Heart right ventricle (tissue), 16 donors: ENCODE measurements at regions of chr2 and their contacts with region 1.

Region 1: DNA sequence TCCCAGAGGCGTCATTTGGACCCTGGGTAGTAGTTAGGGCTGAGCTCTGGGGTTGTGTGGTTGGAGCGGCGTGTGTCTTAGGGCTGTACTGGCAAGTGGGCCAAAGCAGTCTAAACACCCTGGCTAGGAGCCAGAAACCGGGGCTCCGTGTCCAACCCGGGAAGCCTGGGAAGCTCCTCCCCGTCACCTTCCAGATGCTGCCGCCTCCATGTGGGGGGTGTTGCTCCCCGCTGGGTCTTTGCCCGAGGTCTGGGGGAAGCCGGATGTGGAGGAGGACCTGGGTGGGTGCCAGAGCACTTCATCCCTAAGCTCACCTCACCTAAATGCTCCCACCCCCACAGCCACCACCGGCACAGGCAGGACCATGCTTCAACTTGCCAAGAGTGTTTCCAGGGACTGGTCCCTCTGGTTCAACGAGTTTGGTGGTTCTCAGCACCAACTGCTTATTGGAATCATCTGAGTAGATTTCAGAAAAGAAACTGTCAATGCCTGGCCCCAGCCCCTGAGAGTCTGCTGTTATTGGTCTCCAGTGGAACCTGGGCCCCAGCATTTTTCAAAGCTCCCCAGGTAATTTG is 25.5 kb downstream of the TET3 start:
- DNase-seq: peak; percentile 41 to 49
- ATAC-seq: peak; percentile 25 to 72 (median 56)
- H3K4me3 ChIP-seq: peak overlapping the region in 1 of 10 donors; percentile 7
- H3K27ac ChIP-seq: no peak overlapping the region
- H3K4me1 ChIP-seq: peaks cover 8 to 56% (median 47%) of the 10 kb centered on the region in 9 donors
- H3K27me3 ChIP-seq: no peaks in the 10 kb centered on the region
- CTCF ChIP-seq: no peak

Region 2: DNA sequence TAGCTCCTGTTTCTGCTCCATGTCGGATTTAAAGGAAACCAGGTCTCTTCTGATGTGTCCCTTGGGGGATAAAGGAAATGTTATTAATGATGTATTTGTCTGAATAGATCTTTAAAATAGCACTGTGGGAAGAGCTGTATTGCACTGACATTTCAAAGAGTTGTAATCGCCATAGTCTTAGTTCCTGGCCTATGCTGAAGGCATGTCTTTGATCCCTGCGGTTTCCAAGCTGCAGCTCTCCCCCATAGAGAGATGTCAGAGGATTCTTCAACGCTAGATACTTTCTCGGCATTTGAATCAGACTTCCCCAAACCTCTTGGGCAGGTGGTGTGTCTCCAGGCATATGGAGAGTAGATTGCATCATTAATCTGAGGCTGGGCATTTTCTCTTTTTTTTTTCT is 408.4 kb before region 1 on chr2:
- intact Hi-C with region 1: no loop called
- DNase-seq: no peak
- ATAC-seq: no peak
- H3K4me3 ChIP-seq: no peak overlapping the region
- H3K27ac ChIP-seq: no peak overlapping the region
- H3K4me1 ChIP-seq: no peaks in the 10 kb centered on the region
- H3K27me3 ChIP-seq: no peaks in the 10 kb centered on the region
- CTCF ChIP-seq: no peak

Region 3: DNA sequence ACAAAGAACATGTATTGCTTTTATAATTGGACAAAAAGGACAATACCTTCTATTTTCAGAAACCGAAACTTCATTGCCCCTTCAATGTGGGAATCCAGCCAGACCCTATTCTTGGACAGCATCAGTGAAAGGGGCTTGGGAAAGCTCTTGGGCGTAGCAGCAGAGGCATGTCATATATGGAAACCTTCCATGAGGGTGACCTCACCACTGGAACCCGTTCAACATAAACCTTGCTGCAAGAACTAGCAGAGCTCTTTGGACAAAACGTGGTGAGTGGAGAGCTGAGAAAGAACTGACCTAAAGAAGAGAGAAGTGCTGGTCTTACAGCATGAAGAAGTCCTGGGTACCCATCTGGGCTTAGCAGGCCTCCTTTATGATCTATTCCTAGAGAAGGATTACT is 140.1 kb before region 1 on chr2:
- intact Hi-C with region 1: no loop called
- DNase-seq: peak in 1 of 2 donors; percentile 90
- ATAC-seq: peak; percentile 87 to 99 (median 96)
- H3K4me3 ChIP-seq: peak overlapping the region in 1 of 10 donors; percentile 1
- H3K27ac ChIP-seq: peak overlapping the region in 9 of 10 donors; percentile 4 to 84 (median 67)
- H3K4me1 ChIP-seq: peaks cover 0 to 22% (median 16%) of the 10 kb centered on the region in 9 donors
- H3K27me3 ChIP-seq: no peaks in the 10 kb centered on the region
- CTCF ChIP-seq: no peak

Region 4: DNA sequence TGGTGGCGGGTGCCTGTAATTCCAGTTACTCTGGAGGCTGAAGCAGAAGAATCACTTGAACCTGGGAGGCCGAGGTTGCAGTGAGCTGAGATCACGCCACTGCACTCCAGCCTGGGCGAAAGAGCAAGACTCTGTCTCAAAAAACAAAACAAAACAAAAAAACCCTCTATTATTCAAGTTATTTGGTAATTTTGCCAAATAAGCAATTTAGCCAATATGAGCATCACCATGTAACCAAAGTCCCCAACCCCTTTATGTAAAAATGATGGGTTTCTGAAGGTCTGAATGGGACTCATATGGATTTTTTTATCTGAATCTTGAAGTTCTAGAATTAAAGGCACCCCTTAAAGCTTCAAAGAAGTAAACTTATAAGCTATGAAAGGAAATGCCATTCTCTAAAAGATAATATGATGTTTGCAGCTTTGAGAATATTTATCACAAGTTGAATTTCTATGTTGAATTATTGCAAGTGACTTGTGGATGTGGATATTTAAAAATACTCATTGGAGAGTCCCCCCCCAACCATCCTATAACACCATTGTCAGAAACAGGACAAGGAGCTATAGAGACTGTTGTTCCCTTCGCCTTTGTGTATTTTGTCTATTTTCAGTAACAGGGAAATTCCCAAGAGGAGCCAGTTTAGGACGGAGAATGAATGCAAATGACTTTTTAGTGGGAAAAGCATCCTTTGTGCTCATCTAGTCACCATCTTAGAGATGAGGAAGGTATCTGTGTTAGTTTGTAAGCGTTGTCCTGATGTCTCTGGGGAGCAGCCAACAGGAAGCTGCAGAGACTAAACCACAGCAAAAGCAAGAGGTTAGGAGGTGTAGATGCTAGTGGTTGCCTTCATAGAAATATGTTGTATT is 42.8 kb after region 1 on chr2:
- intact Hi-C with region 1: loop called in 1 of 10 experiments (anchors 5 kb)
- DNase-seq: no peak
- ATAC-seq: no peak
- H3K4me3 ChIP-seq: no peak overlapping the region
- H3K27ac ChIP-seq: no peak overlapping the region
- H3K4me1 ChIP-seq: peaks cover 0 to 14% (median 0%) of the 10 kb centered on the region in 9 donors
- H3K27me3 ChIP-seq: no peaks in the 10 kb centered on the region
- CTCF ChIP-seq: no peak

Region 5: DNA sequence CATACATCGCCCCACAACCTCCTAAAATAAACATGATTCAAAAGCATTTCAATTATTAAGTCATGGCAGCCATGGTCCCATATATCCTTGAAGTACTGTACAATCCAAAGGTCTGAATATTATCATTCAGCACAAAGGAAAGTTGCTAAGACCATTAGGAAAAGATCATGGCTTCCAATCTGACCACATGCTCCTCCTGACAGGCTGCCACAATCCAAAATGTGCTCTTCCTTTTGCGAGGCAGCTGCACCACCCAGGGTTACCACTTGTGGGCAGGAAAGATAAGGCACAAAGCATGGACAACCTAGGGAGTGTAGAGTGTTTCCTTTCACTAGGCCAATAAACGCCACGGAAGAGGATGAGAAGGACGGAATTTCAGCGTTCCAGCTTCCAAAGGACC is 132.2 kb after region 1 on chr2:
- intact Hi-C with region 1: no loop called
- DNase-seq: no peak
- ATAC-seq: no peak
- H3K4me3 ChIP-seq: no peak overlapping the region
- H3K27ac ChIP-seq: no peak overlapping the region
- H3K4me1 ChIP-seq: peaks cover 10 to 18% (median 12%) of the 10 kb centered on the region in 9 donors
- H3K27me3 ChIP-seq: no peaks in the 10 kb centered on the region
- CTCF ChIP-seq: no peak